Activated naive CD4-positive, alpha-beta T cell treated with anti-CD3 and anti-CD28 coated beads for 36 hours (primary cell): ENCODE measurements at regions of chr2 and their contacts with region 1.

Region 1: GRCh38 chr2:173210270-173211196 is 134.9 kb downstream of the MAP3K20 start:
- DNase-seq: peak; percentile 72
- H3K4me3 Mint-ChIP-seq: no peak overlapping the region
- H3K27ac Mint-ChIP-seq: no peak overlapping the region
- H3K4me1 Mint-ChIP-seq: no peaks in the 10 kb centered on the region
- H3K27me3 Mint-ChIP-seq: peaks cover 8% of the 10 kb centered on the region

Region 2: GRCh38 chr2:172864182-172864581 is 346.4 kb before region 1 on chr2:
- CTCF ChIA-PET with region 1: no interaction called
- intact Hi-C with region 1: loop called (anchors 1 kb)
- DNase-seq: peak; percentile 78
- H3K4me3 Mint-ChIP-seq: no peak overlapping the region
- H3K27ac Mint-ChIP-seq: no peak overlapping the region
- H3K4me1 Mint-ChIP-seq: no peaks in the 10 kb centered on the region
- H3K27me3 Mint-ChIP-seq: peaks cover 16% of the 10 kb centered on the region

Region 3: GRCh38 chr2:173027181-173028128 is 183.1 kb before region 1 on chr2:
- CTCF ChIA-PET with region 1: interaction called, 239 read pairs
- intact Hi-C with region 1: loop called (anchors 1 kb)
- DNase-seq: peak; percentile 90
- H3K4me3 Mint-ChIP-seq: no peak overlapping the region
- H3K27ac Mint-ChIP-seq: no peak overlapping the region
- H3K4me1 Mint-ChIP-seq: no peaks in the 10 kb centered on the region
- H3K27me3 Mint-ChIP-seq: peaks cover 3% of the 10 kb centered on the region

Region 4: DNA sequence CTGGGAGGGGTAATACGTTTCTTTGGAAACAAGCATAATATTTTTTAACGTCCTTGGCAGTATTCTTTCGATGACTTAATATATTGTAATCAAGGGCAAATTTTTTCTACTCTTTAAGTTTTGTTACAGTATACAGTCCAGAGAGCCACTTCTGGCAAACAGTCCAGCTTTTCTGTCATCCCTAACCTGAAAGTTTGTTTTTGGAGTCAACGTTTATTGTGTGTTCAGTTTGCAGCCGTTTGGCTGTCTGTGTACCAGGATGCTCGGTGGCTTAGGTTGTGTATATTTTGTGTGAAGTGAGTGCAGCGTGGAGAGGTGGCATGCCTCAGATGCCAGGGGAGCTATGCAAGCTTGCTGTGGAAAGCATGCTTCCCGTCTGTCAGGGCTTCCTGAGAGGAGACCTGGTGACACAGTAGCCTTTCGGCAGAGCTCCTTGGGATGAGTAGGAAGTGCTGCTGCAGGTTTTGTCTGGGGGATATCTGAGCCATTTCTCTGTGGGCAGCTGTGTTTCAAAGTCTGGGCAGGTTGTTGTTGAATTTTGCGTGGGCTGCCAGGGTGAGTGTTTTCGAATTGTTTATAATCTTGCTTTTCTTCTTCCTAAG is 120.2 kb before region 1 on chr2:
- CTCF ChIA-PET with region 1: interaction called, 3 read pairs
- intact Hi-C with region 1: loop called (anchors 5 kb)
- DNase-seq: no peak
- H3K4me3 Mint-ChIP-seq: no peak overlapping the region
- H3K27ac Mint-ChIP-seq: no peak overlapping the region
- H3K4me1 Mint-ChIP-seq: no peaks in the 10 kb centered on the region
- H3K27me3 Mint-ChIP-seq: peaks cover 30% of the 10 kb centered on the region